Activated T-helper 1 cell treated with anti-CD3 and anti-CD28 coated beads, Interleukin-12 subunit alpha, Interleukin-12 subunit beta, Interleukin-2, Interleukin-4 antibody, amounts not matched to agents 30 ng/mL and 10 ng/mL and 1 ng/mL, durations not matched to agents 14 hours and 24 hours and 36 hours (primary cell): ENCODE measurements at regions of chr7 and their contacts with region 1.

Region 1: DNA sequence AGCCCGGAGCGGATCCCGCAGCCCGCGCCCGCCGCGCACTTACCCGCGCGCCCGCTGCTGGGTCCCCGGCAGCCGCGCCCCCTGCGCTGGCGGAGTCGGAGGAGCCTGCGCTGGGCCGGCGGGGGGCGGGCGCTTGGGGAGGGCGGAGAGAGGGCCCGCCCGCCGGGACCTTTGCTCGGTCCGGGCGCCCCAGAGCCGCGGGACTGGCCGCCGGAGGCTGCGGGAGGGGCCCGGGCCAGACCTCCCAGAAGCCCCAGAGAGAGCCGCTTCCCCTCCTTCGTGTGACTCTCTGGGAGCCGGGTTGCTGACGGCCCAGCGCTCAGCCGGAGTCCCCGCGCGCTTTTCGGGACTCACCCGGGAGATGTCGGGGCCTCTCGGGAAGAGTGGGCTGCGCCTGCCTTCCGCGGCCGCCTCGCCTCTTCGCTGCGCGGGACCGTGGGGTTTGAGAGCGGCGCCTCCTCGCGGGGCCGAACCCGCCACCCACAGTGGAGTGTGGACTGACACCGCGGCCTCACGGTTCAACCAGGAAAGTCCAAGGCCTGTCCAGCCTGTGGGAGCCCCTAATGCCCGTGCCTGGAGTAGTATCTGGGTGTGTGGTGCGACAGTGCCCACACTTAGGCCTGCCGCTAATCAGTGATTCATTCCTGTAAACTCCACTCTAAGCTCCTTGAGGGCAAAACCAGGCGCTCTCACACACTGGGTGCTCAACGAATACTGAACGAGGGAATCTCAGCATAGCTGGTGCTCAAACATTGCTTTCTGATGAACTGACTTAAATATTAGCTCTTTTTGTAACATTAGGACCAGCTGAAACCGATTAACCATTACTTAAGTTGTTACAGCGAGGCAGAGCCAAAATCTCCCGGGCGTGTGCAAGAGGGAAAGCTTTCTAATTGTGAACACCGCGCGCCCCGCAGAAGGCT is at the start of gene GSDME:
- DNase-seq: peak; percentile 21
- H3K4me3 Mint-ChIP-seq: peak within 1 kb of the TSS; percentile 91
- H3K27ac Mint-ChIP-seq: peak within 1 kb of the TSS; percentile 84
- H3K4me1 Mint-ChIP-seq: peaks cover 38% of the 10 kb centered on the region
- H3K27me3 Mint-ChIP-seq: peaks cover 44% of the 10 kb centered on the region
- total RNA-seq, gene GSDME: 10.6 and 11.0 TPM in 2 replicates

Region 2: DNA sequence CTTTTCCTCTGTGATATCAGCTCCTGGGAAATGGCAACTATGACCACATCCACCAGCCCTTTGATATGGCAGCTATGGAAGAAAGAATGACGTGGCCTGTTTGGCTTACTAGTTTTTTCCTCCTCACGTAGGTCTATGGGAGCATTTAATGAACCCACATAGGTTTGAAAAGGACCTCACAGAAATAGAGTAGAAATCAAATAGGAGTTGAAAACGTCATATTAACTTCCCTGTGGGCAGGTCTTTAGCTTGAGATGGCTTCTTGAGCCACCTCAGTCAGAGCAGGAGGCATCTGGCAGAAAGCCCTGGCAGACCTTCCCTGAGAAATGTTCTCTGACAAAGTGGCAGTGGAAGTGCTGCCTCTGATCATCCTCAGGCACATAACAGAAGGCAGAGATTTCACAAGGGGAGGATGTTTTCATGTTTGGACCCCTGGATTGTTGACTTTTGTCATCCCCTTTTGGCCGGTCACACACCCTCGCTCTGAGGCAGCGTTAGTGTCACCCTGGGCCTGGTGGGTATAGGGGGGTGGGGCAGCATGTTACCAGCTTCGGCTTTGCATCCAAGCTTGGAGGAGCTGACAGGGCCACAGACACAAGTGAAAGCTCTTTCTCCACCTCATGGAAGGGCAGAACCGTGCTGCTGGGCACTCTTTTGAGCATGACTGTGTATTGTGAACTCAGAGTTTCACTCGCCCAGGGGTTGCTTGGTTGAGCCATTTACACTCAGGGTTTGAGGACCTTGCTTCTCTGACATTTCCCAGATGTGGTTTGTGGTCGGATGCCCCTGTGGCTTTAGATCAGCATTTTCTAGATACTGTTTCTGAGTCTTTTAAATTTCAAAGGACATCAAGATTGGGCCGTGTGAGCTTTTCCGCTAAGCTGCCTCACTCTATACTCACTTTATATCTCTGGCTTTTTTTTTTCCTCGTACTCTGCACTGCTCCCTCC is 863.4 kb before region 1 on chr7:
- intact Hi-C with region 1: loop called (anchors 10 kb)
- DNase-seq: peak; percentile 24
- H3K4me3 Mint-ChIP-seq: peak overlapping the region; percentile 41
- H3K27ac Mint-ChIP-seq: peak overlapping the region; percentile 65
- H3K4me1 Mint-ChIP-seq: peaks cover 35% of the 10 kb centered on the region
- H3K27me3 Mint-ChIP-seq: peaks cover 9% of the 10 kb centered on the region

Region 3: GRCh38 chr7:24715661-24716479 is 41.7 kb before region 1 on chr7:
- intact Hi-C with region 1: loop called (anchors 5 kb)
- DNase-seq: no peak
- H3K4me3 Mint-ChIP-seq: no peak overlapping the region
- H3K27ac Mint-ChIP-seq: no peak overlapping the region
- H3K4me1 Mint-ChIP-seq: peaks cover 13% of the 10 kb centered on the region
- H3K27me3 Mint-ChIP-seq: peaks cover 2% of the 10 kb centered on the region

Region 4: DNA sequence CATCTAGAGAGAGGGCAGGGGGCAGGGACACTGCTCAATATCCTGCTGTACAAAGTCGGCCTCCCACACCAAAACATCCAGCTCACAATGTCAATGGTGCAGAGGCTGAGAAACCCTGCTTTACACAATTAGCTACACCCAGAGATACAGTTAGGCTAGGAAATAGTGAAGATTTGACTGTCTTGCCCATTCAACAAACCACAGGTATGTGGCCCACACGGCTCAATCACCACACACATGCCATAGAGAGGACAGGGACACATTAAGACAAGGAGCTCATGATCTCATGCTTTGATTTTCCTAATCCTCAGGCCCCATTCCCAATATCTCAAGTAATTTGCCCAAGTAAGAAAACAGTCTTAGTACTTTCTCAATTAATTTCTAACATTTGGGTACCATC is 112.0 kb after region 1 on chr7:
- intact Hi-C with region 1: loop called (anchors 5 kb)
- DNase-seq: no peak
- H3K4me3 Mint-ChIP-seq: no peak overlapping the region
- H3K27ac Mint-ChIP-seq: peak overlapping the region; percentile 13
- H3K4me1 Mint-ChIP-seq: peaks cover 49% of the 10 kb centered on the region
- H3K27me3 Mint-ChIP-seq: no peaks in the 10 kb centered on the region

Region 5: DNA sequence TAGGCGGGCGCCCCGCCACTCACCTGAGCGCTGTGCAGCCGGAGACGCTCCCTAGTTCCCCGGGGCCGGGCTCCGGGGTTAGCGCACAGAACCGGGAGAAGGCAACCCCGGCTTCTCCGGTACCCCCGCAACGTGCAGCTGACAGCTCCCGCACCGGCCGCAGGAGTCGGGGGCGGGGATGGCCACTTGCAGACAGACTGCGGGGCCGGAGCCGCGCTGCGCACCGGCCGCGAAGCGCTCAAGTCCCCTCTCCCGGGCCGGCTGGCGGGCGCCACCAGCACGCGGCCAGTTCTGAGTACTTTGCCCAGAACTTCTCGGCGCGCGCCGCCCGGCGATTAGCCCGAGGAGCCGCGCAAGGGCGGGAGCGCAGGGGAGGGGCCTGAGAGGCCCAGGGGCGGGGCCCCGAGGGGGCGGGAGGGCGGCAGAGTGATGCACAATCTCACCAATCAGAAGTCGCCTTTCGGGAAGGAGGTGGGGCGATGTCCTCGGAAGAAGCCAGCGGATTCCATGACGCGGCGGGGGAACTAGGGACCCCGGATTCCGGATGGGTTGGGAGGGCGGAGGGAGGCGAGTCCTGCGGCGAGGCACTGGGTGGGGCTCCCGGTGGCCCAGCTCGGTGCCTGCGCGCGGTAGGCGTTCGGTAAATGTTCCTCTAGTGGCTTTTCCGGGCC is 222.4 kb after region 1 on chr7 and contains the start of gene OSBPL3:
- intact Hi-C with region 1: loop called (anchors 1 kb)
- DNase-seq: peak; percentile 91
- H3K4me3 Mint-ChIP-seq: peak within 1 kb of the TSS; percentile 96
- H3K27ac Mint-ChIP-seq: peak within 1 kb of the TSS; percentile 96
- H3K4me1 Mint-ChIP-seq: peaks cover 58% of the 10 kb centered on the region
- H3K27me3 Mint-ChIP-seq: peaks cover 2% of the 10 kb centered on the region
- total RNA-seq, gene OSBPL3: 90.6 and 101 TPM in 2 replicates

Region 6: GRCh38 chr7:25125137-25125946 is 367.7 kb after region 1 on chr7 and contains the start of gene CYCS:
- intact Hi-C with region 1: loop called (anchors 1 kb)
- DNase-seq: peak; percentile 100
- H3K4me3 Mint-ChIP-seq: peak within 1 kb of the TSS; percentile 93
- H3K27ac Mint-ChIP-seq: peak within 1 kb of the TSS; percentile 99
- H3K4me1 Mint-ChIP-seq: peaks cover 29% of the 10 kb centered on the region
- H3K27me3 Mint-ChIP-seq: no peaks in the 10 kb centered on the region
- total RNA-seq, gene CYCS: 280 TPM in 2 replicates